ENCODE measurements at regions of chr1 and their contacts with region 1.

Region 1: GRCh38 chr1:108512239-108512981 is 47.5 kb upstream of the EEIG2 start:
- DNase-seq: peak in 1 of 2 donors; percentile 78
- ATAC-seq: peak; percentile 59 to 82 (median 79)
- H3K4me3 ChIP-seq: no peak overlapping the region
- H3K4me3 Mint-ChIP-seq: no peak overlapping the region
- H3K27ac ChIP-seq: no peak overlapping the region
- H3K27ac Mint-ChIP-seq: no peak overlapping the region
- H3K4me1 ChIP-seq: no peaks in the 10 kb centered on the region
- H3K4me1 Mint-ChIP-seq: no peaks in the 10 kb centered on the region
- H3K27me3 ChIP-seq: no peaks in the 10 kb centered on the region
- H3K27me3 Mint-ChIP-seq: peaks cover 12% of the 10 kb centered on the region in 2 donors
- CTCF ChIP-seq: peak; percentile 97

Region 2: DNA sequence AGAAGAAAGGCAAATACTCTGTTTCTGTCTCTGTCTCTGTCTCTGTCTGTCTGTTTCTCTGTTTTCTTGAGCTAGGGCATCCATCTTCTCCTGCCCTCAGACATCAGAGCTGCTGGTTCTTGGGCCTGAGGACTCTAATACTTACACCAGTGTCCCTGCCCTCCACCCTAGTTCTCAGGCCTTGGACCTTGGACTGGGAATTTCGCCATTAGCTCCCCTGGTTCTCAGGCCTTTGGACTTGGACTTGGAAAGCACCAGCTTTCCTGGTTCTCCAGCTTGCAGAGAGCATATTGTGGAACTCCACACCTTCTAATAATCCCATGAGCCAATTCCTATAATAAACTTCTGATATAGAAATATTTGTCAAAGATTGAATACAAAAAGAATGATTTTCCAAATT is 29.7 kb before region 1 on chr1:
- intact Hi-C with region 1: no loop called
- DNase-seq: no peak
- ATAC-seq: no peak
- H3K4me3 ChIP-seq: no peak overlapping the region
- H3K4me3 Mint-ChIP-seq: no peak overlapping the region
- H3K27ac ChIP-seq: no peak overlapping the region
- H3K27ac Mint-ChIP-seq: no peak overlapping the region
- H3K4me1 ChIP-seq: no peaks in the 10 kb centered on the region
- H3K4me1 Mint-ChIP-seq: no peaks in the 10 kb centered on the region
- H3K27me3 ChIP-seq: no peaks in the 10 kb centered on the region
- H3K27me3 Mint-ChIP-seq: peaks cover 18 to 29% of the 10 kb centered on the region in 2 donors
- CTCF ChIP-seq: no peak

Region 3: GRCh38 chr1:108559215-108560186 is 47.1 kb after region 1 on chr1 and contains the start of gene EEIG2:
- intact Hi-C with region 1: loop called (anchors 1 kb)
- DNase-seq: peak; percentile 85 to 95
- ATAC-seq: peak; percentile 88 to 95 (median 91)
- H3K4me3 ChIP-seq: peak within 1 kb of the TSS; percentile 74
- H3K4me3 Mint-ChIP-seq: peak within 1 kb of the TSS; percentile 95
- H3K27ac ChIP-seq: peak within 1 kb of the TSS; percentile 52
- H3K27ac Mint-ChIP-seq: peak within 1 kb of the TSS; percentile 86 to 88
- H3K4me1 ChIP-seq: peaks cover 28% of the 10 kb centered on the region
- H3K4me1 Mint-ChIP-seq: peaks cover 30% of the 10 kb centered on the region in 2 donors
- H3K27me3 ChIP-seq: no peaks in the 10 kb centered on the region
- H3K27me3 Mint-ChIP-seq: no peaks in the 10 kb centered on the region
- CTCF ChIP-seq: peak; percentile 74
- total RNA-seq, gene EEIG2: 18.2 to 23.9 (median 20.3) TPM

Region 4: DNA sequence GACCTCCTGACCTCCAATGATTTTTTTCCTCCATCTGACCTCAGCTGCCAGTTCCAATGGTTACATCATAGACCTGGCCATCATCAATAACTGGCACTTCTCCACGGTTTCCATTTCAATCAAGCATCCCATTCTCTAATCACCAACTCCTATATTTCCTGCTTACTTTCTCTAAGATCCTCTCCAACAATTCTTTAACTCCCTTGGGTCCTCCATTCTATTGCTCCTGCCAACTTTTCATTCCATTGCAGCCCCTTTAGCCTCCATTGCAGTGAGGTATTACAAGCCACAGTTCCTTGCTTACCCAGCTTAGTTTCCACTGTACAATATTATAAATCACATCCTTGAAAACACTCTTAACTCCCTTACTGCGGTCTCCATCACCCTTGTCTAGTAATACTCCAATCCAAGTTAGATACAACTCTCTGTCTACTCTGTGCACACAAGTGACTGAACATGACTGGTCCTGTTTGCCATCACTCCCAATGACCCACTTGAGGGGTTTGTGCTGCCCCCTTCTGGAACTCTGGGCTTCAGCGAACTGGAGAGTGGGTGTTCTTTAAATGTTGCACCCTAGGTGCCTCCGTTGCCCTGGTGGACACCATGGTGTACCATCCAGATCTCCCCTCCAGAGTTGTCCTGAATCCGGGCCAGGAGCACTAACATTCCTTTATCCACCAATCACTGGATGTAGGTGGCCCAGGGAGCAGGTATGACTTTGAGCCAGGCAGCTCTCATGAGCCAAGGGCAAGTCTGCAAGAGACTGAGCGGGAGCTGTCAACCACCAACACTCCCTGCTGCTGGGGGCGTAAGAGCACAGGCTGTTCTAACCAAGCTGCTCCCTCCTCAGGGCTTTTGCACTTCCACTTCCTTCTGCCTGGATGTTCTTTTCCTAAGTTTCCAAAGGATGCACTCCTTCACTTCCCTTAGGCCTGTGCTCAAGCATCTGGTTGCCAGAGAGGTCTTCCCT is 196.6 kb after region 1 on chr1:
- intact Hi-C with region 1: loop called (anchors 5 kb)
- DNase-seq: peak; percentile 48 to 81
- ATAC-seq: peak; percentile 72 to 90 (median 87)
- H3K4me3 ChIP-seq: no peak overlapping the region
- H3K4me3 Mint-ChIP-seq: no peak overlapping the region
- H3K27ac ChIP-seq: no peak overlapping the region
- H3K27ac Mint-ChIP-seq: peak overlapping the region in 1 of 2 donors; percentile 35
- H3K4me1 ChIP-seq: peaks cover 11% of the 10 kb centered on the region
- H3K4me1 Mint-ChIP-seq: peaks cover 17 to 25% of the 10 kb centered on the region in 2 donors
- H3K27me3 ChIP-seq: no peaks in the 10 kb centered on the region
- H3K27me3 Mint-ChIP-seq: no peaks in the 10 kb centered on the region
- CTCF ChIP-seq: peak; percentile 53

Region 5: DNA sequence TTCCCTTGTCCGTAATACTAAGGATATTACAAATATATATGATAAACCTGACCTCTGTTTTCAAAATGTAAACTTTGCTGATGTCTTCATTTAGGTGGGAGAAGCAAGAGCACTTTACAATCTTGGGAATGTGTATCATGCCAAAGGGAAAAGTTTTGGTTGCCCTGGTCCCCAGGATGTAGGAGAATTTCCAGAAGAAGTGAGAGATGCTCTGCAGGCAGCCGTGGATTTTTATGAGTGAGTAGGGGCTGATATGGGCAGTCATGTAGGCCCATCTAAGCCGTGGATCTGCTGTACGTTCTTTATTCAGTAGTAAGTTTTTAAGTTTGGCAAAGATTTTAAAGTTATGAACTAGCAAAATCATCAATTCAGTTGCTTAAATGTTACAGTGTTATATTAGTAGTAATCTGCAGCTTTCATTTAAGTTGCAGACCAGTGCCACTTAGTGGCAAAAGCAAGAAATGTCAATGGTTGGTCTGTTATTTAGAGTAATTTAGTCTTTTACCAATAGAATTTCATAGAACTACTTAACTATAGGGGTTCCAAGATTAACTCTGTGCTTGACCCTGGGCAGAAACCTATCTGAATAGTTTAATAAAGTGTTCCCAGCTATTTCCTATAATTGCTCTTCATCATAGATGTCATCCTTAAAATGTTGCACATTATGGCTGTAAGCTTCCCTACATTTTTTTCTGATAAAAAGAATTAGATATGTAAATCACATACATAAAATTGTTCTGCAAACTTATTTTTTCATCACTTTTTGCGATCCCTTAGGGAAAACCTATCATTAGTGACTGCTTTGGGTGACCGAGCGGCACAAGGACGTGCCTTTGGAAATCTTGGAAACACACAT is 385.7 kb after region 1 on chr1:
- intact Hi-C with region 1: loop called (anchors 10 kb)
- DNase-seq: peak in 1 of 2 donors; percentile 72
- ATAC-seq: peak; percentile 83 to 91 (median 89)
- H3K4me3 ChIP-seq: no peak overlapping the region
- H3K4me3 Mint-ChIP-seq: no peak overlapping the region
- H3K27ac ChIP-seq: no peak overlapping the region
- H3K27ac Mint-ChIP-seq: no peak overlapping the region
- H3K4me1 ChIP-seq: no peaks in the 10 kb centered on the region
- H3K4me1 Mint-ChIP-seq: no peaks in the 10 kb centered on the region
- H3K27me3 ChIP-seq: no peaks in the 10 kb centered on the region
- H3K27me3 Mint-ChIP-seq: no peaks in the 10 kb centered on the region
- CTCF ChIP-seq: peak; percentile 76